Activated CD8-positive, alpha-beta T cell treated with anti-CD3 and anti-CD28 coated beads, Interleukin-2, amount 10 ng/mL, durations not matched to agents 7 days and 5 days (primary cell): ENCODE measurements at regions of chr1 and their contacts with region 1.

Region 1: DNA sequence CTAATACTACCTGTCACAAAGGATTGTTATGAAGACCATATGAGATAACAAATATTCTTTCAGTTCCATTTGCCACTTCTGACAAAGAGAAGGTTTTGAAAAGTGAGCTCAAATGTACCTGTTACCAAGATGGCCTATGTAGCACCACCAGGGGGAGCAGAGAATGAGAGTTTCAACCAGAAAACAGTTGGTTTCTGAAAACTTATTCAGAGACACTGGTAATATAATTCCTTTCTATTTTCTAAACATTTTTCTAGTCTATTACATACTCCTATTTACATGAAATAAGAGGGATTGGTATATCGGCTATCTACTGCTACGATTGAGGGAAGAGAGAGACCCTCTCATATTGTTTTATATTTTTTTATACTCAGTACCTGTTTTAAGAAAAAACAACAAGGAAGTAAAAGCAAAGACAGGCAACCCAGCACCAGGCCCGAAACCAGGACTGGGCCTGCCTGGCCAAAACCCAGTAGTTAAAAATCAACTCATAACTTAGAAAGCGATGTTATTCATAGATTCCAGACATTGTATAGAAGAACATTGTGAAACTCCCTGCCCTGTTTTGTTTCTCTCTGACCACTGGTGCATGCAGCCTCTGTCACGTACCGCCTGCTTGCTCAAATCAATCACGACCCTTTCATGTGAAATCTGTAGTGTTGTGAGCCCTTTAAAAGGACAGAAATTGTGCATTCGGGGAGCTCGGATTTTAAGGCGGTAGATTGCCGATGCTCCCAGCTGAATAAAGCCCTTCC is 48.3 kb downstream of the IL23R start:
- DNase-seq: peak; percentile 78
- ATAC-seq: peak; percentile 27
- H3K4me3 Mint-ChIP-seq: no peak overlapping the region
- H3K27ac Mint-ChIP-seq: no peak overlapping the region
- H3K4me1 Mint-ChIP-seq: peaks cover 44% of the 10 kb centered on the region
- H3K27me3 Mint-ChIP-seq: no peaks in the 10 kb centered on the region

Region 2: GRCh38 chr1:67053785-67054772 is 160.5 kb before region 1 on chr1 and contains the start of gene SLC35D1:
- CTCF ChIA-PET with region 1: interaction called, 10 read pairs
- POLR2A ChIA-PET with region 1: interaction called, 3 read pairs
- DNase-seq: peak; percentile 79
- ATAC-seq: peak; percentile 81
- H3K4me3 Mint-ChIP-seq: peak within 1 kb of the TSS; percentile 77
- H3K27ac Mint-ChIP-seq: peak within 1 kb of the TSS; percentile 91
- H3K4me1 Mint-ChIP-seq: peaks cover 20% of the 10 kb centered on the region
- H3K27me3 Mint-ChIP-seq: peaks cover 10% of the 10 kb centered on the region
- total RNA-seq, gene SLC35D1: 11.2 to 11.4 TPM

Region 3: DNA sequence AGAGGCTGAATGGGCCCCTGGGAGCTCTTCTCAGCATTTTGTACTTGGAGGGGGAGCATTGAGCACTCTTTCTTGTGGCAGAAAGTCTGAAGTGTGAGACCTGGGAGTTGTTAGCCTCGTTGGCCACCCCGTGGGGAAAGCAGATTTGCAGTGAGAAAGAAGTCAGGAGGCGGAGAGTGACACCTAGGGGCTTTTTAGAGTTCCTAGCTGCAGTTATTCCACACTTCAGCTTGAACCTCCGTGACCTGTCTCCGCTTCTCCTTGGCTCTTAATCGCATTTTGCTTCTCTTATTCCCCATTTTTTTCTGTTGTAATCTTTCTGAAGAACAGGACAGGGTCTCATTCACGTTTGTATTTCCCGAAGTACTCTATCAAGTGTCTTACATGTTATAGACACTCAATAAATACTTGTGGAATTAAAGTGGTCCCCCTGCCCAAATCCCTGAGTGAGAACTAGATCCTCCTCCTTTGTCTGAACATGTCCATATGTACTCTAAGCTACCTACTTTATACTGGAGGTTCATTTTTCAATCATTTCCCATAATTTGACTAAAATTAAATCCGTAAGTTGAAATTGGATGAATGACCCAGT is 65.3 kb before region 1 on chr1:
- CTCF ChIA-PET with region 1: interaction called, 313 read pairs
- POLR2A ChIA-PET with region 1: no interaction called
- DNase-seq: peak; percentile 77
- ATAC-seq: peak; percentile 86
- H3K4me3 Mint-ChIP-seq: no peak overlapping the region
- H3K27ac Mint-ChIP-seq: peak overlapping the region; percentile 58
- H3K4me1 Mint-ChIP-seq: peaks cover 42% of the 10 kb centered on the region
- H3K27me3 Mint-ChIP-seq: peaks cover 33% of the 10 kb centered on the region

Region 4: DNA sequence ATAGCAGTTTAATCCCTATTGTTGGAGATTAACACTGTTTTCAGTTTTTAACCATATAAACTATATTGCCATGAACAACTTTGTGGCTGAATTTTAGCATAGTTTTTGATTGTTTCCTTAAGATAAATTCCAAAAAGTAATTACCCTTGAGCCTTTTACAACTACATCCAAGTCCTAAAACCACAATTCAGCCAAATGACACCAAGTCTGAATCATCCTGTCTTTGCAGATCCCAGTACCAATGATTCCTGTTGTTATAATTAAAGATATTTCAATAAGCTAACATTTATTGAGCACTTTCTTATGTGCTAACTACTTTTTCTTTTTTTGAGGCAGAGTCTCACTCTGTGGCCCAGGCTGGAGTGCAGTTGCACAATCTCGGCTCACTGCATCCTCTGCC is 12.7 kb before region 1 on chr1:
- CTCF ChIA-PET with region 1: interaction called, 57 read pairs
- POLR2A ChIA-PET with region 1: no interaction called
- DNase-seq: no peak
- ATAC-seq: no peak
- H3K4me3 Mint-ChIP-seq: no peak overlapping the region
- H3K27ac Mint-ChIP-seq: no peak overlapping the region
- H3K4me1 Mint-ChIP-seq: peaks cover 3% of the 10 kb centered on the region
- H3K27me3 Mint-ChIP-seq: peaks cover 3% of the 10 kb centered on the region

Region 5: DNA sequence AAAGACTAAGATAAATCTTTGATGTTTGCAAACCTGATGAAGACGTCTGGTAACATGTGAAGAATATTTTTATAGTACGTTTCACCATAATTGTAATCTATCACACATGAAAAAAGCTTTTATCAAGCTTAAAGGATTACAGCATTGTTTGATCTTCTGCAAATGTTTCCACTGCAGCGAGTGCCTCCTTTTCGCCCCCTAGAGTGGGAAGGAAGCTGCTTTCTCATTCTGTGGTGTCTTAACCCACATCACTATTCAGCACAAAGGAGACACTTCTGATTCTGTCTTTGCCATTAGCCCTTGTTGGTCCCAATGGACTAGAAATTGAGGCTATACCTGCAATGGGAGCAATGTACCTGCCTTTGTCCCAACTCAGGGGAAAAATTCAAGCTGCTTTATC is 47.1 kb after region 1 on chr1:
- CTCF ChIA-PET with region 1: interaction called, 18 read pairs
- POLR2A ChIA-PET with region 1: no interaction called
- DNase-seq: peak; percentile 63
- ATAC-seq: peak; percentile 89
- H3K4me3 Mint-ChIP-seq: no peak overlapping the region
- H3K27ac Mint-ChIP-seq: no peak overlapping the region
- H3K4me1 Mint-ChIP-seq: peaks cover 28% of the 10 kb centered on the region
- H3K27me3 Mint-ChIP-seq: no peaks in the 10 kb centered on the region

Region 6: GRCh38 chr1:67393240-67393639 is 178.6 kb after region 1 on chr1:
- CTCF ChIA-PET with region 1: interaction called, 10 read pairs
- POLR2A ChIA-PET with region 1: no interaction called
- DNase-seq: no peak
- ATAC-seq: no peak
- H3K4me3 Mint-ChIP-seq: no peak overlapping the region
- H3K27ac Mint-ChIP-seq: peak overlapping the region; percentile 33
- H3K4me1 Mint-ChIP-seq: no peaks in the 10 kb centered on the region
- H3K27me3 Mint-ChIP-seq: no peaks in the 10 kb centered on the region

Region 7: DNA sequence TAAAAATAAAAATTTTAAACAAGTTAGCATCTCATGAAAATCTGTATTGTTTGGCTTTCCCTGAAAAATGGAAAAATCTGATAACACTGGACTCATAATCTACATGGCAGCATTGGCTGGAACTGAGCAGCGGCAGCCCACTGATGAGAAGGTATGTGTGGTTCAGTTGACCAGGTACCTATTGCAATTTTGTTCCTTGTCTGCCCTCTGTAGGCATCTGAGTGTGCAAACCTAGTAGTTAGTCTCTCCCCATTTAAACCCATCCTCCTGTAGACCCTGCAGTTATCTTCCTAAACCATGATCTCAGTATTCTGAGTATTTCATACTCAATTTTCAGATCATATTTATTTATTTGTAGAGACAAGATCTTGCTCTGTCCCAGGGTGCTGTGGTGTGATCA is 275.0 kb after region 1 on chr1:
- CTCF ChIA-PET with region 1: interaction called, 19 read pairs
- POLR2A ChIA-PET with region 1: no interaction called
- DNase-seq: no peak
- ATAC-seq: peak; percentile 53
- H3K4me3 Mint-ChIP-seq: no peak overlapping the region
- H3K27ac Mint-ChIP-seq: no peak overlapping the region
- H3K4me1 Mint-ChIP-seq: no peaks in the 10 kb centered on the region
- H3K27me3 Mint-ChIP-seq: peaks cover 4% of the 10 kb centered on the region